ENCODE measurements at regions of chr13 and their contacts with region 1.

Region 1: DNA sequence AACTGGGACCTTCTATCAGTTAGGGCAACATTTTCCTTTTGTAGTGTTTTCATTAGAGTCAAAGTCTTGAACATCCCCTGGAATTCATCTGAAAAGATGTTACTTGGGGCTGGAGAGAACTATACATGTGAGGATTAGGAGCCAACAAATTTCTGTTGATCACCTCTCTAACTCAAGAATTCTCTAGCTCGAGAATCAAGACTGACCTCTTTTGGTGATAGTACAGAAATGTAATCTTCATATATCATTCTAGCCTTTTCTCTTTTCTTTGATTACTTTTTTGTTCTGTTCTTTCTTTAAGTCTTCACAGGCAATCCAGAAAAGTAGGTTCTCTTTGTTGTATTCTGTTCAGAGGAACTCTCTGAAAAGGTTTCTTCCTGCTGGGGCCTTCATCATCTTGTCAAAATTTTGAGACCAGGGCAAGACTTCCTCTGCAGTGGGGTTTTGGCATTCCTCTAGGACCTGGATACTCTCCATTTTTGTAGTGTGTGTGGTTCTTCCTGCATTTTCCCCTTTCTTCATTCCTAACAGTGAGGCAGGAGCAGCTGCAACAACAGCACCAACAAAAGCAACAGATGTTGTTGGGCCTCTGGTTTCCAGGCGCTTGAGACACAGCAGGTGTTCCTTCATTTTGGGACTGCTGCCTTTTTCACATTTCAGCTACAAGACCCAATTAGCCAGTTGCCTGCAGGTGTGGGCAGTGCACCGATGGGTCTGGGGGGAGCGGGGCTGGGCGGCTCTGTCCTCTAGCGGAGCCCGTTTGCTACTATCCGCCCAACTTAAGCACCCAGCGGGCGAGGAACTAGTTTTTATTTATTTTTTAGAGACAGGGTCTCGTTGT is 26.2 kb downstream of the ELF1 start:
- DNase-seq: peak; percentile 43
- ATAC-seq: no peak
- H3K4me3 ChIP-seq: no peak overlapping the region
- H3K4me3 Mint-ChIP-seq: peak overlapping the region; percentile 43
- H3K27ac ChIP-seq: peak overlapping the region; percentile 36 to 70
- H3K27ac Mint-ChIP-seq: peak overlapping the region; percentile 78
- H3K4me1 ChIP-seq: peaks cover 60 to 83% of the 10 kb centered on the region in 2 donors
- H3K4me1 Mint-ChIP-seq: peaks cover 75% of the 10 kb centered on the region
- H3K27me3 ChIP-seq: no peaks in the 10 kb centered on the region
- H3K27me3 Mint-ChIP-seq: no peaks in the 10 kb centered on the region
- CTCF ChIP-seq: peak; percentile 16

Region 2: GRCh38 chr13:41011382-41011956 is 18.6 kb after region 1 on chr13:
- CTCF ChIA-PET with region 1: interaction called, 6 read pairs
- POLR2A ChIA-PET with region 1: no interaction called
- intact Hi-C with region 1: loop called (anchors 2 kb)
- DNase-seq: no peak
- ATAC-seq: no peak
- H3K4me3 ChIP-seq: peak overlapping the region in 1 of 5 experiments; percentile 10
- H3K4me3 Mint-ChIP-seq: peak overlapping the region; percentile 47
- H3K27ac ChIP-seq: no peak overlapping the region
- H3K27ac Mint-ChIP-seq: peak overlapping the region; percentile 32
- H3K4me1 ChIP-seq: peaks cover 62 to 81% of the 10 kb centered on the region in 2 donors
- H3K4me1 Mint-ChIP-seq: peaks cover 65% of the 10 kb centered on the region
- H3K27me3 ChIP-seq: no peaks in the 10 kb centered on the region
- H3K27me3 Mint-ChIP-seq: no peaks in the 10 kb centered on the region
- CTCF ChIP-seq: no peak

Region 3: GRCh38 chr13:42333613-42334328 is 1340.9 kb after region 1 on chr13:
- CTCF ChIA-PET with region 1: no interaction called
- POLR2A ChIA-PET with region 1: no interaction called
- intact Hi-C with region 1: no loop called
- DNase-seq: peak; percentile 55
- ATAC-seq: peak; percentile 57
- H3K4me3 ChIP-seq: no peak overlapping the region
- H3K4me3 Mint-ChIP-seq: no peak overlapping the region
- H3K27ac ChIP-seq: no peak overlapping the region
- H3K27ac Mint-ChIP-seq: no peak overlapping the region
- H3K4me1 ChIP-seq: peaks cover 10 to 16% of the 10 kb centered on the region in 2 donors
- H3K4me1 Mint-ChIP-seq: peaks cover 19% of the 10 kb centered on the region
- H3K27me3 ChIP-seq: no peaks in the 10 kb centered on the region
- H3K27me3 Mint-ChIP-seq: no peaks in the 10 kb centered on the region
- CTCF ChIP-seq: peak; percentile 61